Activated CD8-positive, alpha-beta memory T cell treated with anti-CD3 and anti-CD28 coated beads, Interleukin-2, amount 10 ng/mL, durations not matched to agents 7 days and 5 days (primary cell): ENCODE measurements at regions of chr4 and their contacts with region 1.

Region 1: GRCh38 chr4:185395956-185396723 is 416 bp upstream of the LRP2BP start:
- DNase-seq: peak; percentile 96
- ATAC-seq: peak; percentile 91
- H3K4me3 Mint-ChIP-seq: peak overlapping the region; percentile 96
- H3K27ac Mint-ChIP-seq: peak overlapping the region; percentile 98
- H3K4me1 Mint-ChIP-seq: peaks cover 49% of the 10 kb centered on the region
- H3K27me3 Mint-ChIP-seq: no peaks in the 10 kb centered on the region

Region 2: DNA sequence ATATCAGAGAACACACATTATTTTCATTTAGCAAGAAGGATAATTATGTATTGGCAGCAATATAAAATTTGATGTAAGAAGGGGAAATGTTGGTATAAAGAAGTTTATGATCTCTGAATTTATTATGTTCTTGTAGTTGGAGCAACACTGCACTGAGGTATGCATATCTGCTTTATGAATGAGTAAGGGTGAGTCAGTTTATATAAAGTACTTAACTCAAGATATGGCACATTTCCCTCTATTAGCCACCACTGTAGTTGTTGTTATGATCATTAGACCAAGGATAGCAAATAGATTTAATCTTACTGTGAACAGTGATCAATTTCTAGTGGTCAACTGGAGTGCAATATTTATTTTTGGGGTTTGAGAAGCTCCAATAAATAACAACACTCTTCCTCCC is 120.1 kb before region 1 on chr4:
- CTCF ChIA-PET with region 1: no interaction called
- DNase-seq: no peak
- ATAC-seq: no peak
- H3K4me3 Mint-ChIP-seq: no peak overlapping the region
- H3K27ac Mint-ChIP-seq: no peak overlapping the region
- H3K4me1 Mint-ChIP-seq: peaks cover 10% of the 10 kb centered on the region
- H3K27me3 Mint-ChIP-seq: no peaks in the 10 kb centered on the region

Region 3: GRCh38 chr4:185384930-185385331 is 11.2 kb before region 1 on chr4:
- CTCF ChIA-PET with region 1: interaction called, 10 read pairs
- DNase-seq: no peak
- ATAC-seq: no peak
- H3K4me3 Mint-ChIP-seq: no peak overlapping the region
- H3K27ac Mint-ChIP-seq: no peak overlapping the region
- H3K4me1 Mint-ChIP-seq: peaks cover 12% of the 10 kb centered on the region
- H3K27me3 Mint-ChIP-seq: no peaks in the 10 kb centered on the region

Region 4: DNA sequence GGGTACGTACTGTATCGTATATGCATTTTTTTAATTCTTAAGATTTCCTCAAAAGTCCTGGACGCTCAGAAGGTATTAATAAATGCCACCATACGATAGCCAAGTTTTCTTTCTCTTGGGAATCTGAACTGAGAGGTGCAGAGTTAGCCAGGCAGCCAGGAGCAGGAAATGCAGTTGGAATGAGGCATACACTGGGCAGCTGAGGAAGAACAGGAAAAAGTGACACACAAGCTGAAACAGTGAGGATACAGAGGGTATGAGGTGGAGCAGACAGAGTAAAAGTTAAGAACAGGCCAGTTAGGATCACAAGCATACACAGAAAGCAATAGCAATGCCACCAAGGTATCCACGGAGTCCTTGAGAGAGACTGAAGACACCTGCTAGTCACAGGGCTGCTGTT is 16.3 kb after region 1 on chr4:
- CTCF ChIA-PET with region 1: no interaction called
- DNase-seq: no peak
- ATAC-seq: no peak
- H3K4me3 Mint-ChIP-seq: no peak overlapping the region
- H3K27ac Mint-ChIP-seq: no peak overlapping the region
- H3K4me1 Mint-ChIP-seq: no peaks in the 10 kb centered on the region
- H3K27me3 Mint-ChIP-seq: no peaks in the 10 kb centered on the region